ENCODE measurements at regions of chr18 and their contacts with region 1.

Region 1: DNA sequence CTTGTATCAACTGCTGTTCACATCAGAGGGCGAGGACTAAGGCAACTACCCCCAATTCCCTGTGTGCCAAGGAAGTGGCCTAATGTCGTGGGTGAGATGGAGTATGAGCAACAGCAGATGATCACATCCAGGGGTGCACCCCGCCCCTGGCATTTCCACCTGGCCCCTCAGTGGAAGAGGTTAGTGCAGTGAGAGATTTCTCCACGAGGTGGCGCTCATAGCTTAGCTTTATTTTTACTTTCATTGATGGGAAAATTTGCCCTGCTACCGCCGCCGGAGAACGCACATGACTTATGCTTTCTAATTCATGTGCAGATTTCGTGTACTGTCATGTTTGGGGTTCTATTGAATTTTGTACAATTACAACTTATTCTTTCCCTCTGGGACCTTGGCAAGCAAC is 470.6 kb upstream of the MEX3C start:
- DNase-seq: peak in 9 of 10 donors; percentile 23 to 92 (median 69)

Region 2: DNA sequence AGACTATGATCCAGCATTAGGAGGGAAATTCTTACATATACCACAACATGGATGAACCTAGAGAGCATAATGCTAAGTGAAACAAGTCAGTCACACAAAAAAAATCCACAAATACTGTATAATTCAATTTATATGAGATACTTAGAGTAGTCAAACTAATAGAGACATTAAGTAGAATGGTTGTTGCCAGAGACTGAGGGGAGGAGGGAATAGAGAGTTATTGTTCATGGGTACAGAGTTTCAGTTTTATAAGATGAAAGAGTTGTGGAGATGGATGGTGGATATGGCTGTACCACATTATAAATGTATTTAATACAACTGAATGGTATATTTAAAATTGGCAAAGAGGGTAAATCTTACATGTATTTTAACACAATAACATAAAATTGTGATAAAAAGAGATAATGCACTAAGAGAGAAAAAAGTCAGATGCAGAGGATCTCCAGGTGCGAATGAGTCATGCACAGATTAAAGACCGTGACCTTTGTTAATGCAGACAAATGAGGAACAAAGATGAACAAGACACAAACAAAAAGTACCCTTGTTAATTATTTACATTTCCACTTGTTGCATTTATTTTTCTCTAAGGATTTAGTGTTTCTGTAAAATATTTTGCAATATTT is 71.1 kb after region 1 on chr18:
- intact Hi-C with region 1: no loop called
- DNase-seq: no peak

Region 3: GRCh38 chr18:52339891-52340371 is 671.8 kb after region 1 on chr18 and contains the start of gene DCC:
- intact Hi-C with region 1: loop called (anchors 10 kb)
- DNase-seq: peak; percentile 53 to 95 (median 74)

Region 4: GRCh38 chr18:52670896-52671295 is 1002.8 kb after region 1 on chr18:
- intact Hi-C with region 1: loop called (anchors 1 kb)
- DNase-seq: no peak

Region 5: DNA sequence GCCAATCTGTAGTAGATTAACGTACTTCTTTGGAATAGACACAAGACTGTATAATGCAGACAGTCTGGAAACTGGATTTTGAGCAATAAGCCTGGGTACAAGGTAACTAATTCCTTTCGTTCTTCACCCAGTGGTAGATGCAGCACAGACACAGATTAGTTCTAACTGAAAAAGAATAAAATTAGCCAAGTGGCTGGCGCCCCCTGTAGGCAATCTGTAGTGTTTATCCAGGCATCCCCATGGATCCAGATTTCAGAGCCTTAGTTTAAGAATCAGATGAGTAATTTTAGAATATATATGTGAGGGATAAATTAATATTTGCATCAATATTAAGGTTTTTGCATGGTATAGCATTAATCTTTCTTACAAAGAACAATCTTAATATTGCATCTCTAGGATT is 1235.8 kb after region 1 on chr18:
- intact Hi-C with region 1: loop called (anchors 5 kb)
- DNase-seq: peak in 7 of 10 donors; percentile 50 to 85 (median 64)

Region 6: GRCh38 chr18:53380063-53380639 is 1712.0 kb after region 1 on chr18:
- intact Hi-C with region 1: loop called (anchors 5 kb)
- DNase-seq: peak in 1 of 10 donors; percentile 10